HCT116 (cell line): ENCODE measurements at regions of chr15 and their contacts with region 1.

Region 1: DNA sequence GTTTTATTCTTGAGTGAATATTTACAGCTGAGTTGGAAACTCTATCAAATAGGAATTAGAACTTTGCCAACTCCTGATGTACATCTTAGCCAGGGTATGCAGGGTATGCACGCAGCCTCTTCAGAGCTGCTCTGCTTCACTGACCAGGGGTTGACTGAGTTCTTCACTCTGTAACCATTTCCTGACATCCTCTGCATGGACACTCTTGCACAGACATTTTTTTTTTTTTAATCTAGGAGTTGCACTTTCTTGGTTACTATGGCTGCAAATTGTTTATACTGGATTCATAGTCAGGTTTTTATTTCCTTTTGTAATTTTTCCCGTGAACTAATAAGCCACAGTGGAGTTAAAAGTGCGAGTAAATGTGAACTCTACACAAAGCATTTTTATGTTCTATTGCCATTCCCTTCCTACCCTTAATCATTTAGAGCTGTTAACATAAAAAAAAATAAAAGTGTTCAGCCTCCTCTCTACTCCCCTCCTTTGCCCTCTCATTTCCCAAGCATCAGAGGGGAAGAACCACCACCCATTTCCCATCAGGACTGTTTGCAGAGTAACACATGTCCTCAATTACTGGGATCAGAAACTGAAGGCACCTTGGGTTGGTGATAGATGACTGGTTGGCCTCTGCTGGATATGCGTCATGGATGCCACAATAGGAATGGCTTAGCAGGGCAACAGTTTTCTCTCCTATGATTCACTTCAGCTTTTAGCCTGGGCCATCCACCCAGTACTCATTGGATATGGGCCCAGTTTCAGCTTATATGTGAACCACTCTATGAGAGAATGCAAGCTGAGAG is 54.0 kb downstream of the DUT start:
- DNase-seq: no peak
- ATAC-seq: no peak
- H3K4me3 ChIP-seq: no peak overlapping the region
- H3K27ac ChIP-seq: no peak overlapping the region
- H3K4me1 ChIP-seq: peaks cover 3 to 34% of the 10 kb centered on the region in 2 experiments; a peak in 3 of 4 replicates
- H3K27me3 ChIP-seq: no peaks in the 10 kb centered on the region
- CTCF ChIP-seq: no peak
- POLR2A ChIP-seq: no peak
- RAD21 ChIP-seq: no peak

Region 2: DNA sequence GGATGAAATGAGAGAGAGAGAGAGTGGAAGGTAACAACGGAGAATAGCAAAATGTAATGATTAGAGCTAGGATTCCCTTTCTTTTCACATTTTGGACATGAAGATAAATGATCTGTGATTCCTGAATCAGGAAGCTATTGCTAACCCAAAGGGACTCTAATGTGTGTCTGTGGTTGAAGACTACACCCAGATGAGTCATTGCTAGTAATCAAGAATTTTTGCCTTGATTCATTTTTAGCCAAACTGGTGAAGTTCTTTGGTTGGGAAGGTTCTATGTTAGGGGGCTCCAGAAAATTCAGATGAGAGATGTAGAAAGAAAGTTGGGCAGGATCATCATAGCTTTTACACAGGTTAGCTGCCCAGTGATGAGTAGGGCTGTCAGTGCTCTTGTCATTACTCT is 62.4 kb after region 1 on chr15:
- CTCF ChIA-PET with region 1: no interaction called
- POLR2A ChIA-PET with region 1: no interaction called
- RAD21 ChIA-PET with region 1: no interaction called
- intact Hi-C with region 1: loop called (anchors 5 kb)
- DNase-seq: no peak
- ATAC-seq: peak; percentile 78
- H3K4me3 ChIP-seq: peak overlapping the region in 1 of 2 experiments; percentile 39; a peak in 2 of 4 replicates
- H3K27ac ChIP-seq: no peak overlapping the region
- H3K4me1 ChIP-seq: peaks cover 17 to 35% of the 10 kb centered on the region in 2 experiments
- H3K27me3 ChIP-seq: no peaks in the 10 kb centered on the region
- CTCF ChIP-seq: no peak
- POLR2A ChIP-seq: no peak
- RAD21 ChIP-seq: no peak

Region 3: DNA sequence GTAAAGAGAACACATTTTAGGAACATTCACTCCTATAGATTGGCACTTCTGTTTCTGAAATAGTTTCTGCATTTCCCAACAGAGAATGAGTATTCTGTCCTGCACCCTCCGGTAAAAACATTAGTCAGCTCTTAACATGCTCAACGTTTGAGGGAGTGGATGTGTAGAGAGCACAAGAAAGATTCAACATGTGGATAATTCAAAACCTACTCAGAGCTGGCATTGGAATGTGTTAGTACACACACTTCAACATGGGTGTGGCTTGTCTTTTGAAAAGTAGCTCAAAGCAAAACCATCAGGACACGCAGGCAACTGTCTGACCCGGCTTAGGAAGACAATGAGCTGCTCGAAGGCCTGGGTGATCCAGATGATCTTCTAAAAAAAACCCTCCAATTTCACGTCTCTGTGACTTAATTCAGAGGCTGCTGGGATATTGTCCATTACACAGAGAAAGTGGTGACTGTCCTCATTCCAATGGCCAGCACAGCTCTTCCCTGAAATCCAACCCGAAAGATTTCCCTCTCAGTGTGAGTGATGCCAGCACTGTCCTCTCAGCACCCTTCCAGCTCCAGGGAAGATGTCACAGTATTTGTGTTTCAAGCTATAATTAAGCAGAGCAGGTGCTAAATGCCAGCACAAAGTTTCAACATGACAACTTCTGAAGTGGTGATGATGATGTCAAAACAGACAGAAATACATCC is 242.2 kb after region 1 on chr15:
- CTCF ChIA-PET with region 1: no interaction called
- POLR2A ChIA-PET with region 1: no interaction called
- RAD21 ChIA-PET with region 1: no interaction called
- intact Hi-C with region 1: no loop called
- DNase-seq: no peak
- ATAC-seq: no peak
- H3K4me3 ChIP-seq: no peak overlapping the region
- H3K27ac ChIP-seq: no peak overlapping the region
- H3K4me1 ChIP-seq: no peaks in the 10 kb centered on the region
- H3K27me3 ChIP-seq: no peaks in the 10 kb centered on the region
- CTCF ChIP-seq: no peak
- POLR2A ChIP-seq: no peak
- RAD21 ChIP-seq: no peak

Region 4: GRCh38 chr15:48671103-48672022 is 286.1 kb after region 1 on chr15:
- CTCF ChIA-PET with region 1: no interaction called
- POLR2A ChIA-PET with region 1: no interaction called
- RAD21 ChIA-PET with region 1: no interaction called
- intact Hi-C with region 1: no loop called
- DNase-seq: no peak
- ATAC-seq: no peak
- H3K4me3 ChIP-seq: no peak overlapping the region
- H3K27ac ChIP-seq: no peak overlapping the region
- H3K4me1 ChIP-seq: no peaks in the 10 kb centered on the region
- H3K27me3 ChIP-seq: no peaks in the 10 kb centered on the region
- CTCF ChIP-seq: no peak
- POLR2A ChIP-seq: no peak
- RAD21 ChIP-seq: no peak

Region 5: GRCh38 chr15:48794697-48795134 is 409.5 kb after region 1 on chr15:
- CTCF ChIA-PET with region 1: no interaction called
- POLR2A ChIA-PET with region 1: no interaction called
- RAD21 ChIA-PET with region 1: no interaction called
- intact Hi-C with region 1: no loop called
- DNase-seq: no peak
- ATAC-seq: no peak
- H3K4me3 ChIP-seq: no peak overlapping the region
- H3K27ac ChIP-seq: no peak overlapping the region
- H3K4me1 ChIP-seq: peaks cover 6 to 7% of the 10 kb centered on the region in 2 experiments; a peak in 2 of 4 replicates
- H3K27me3 ChIP-seq: no peaks in the 10 kb centered on the region
- CTCF ChIP-seq: no peak
- POLR2A ChIP-seq: no peak
- RAD21 ChIP-seq: no peak